Panc1 (cell line): ENCODE measurements at regions of chr12 and their contacts with region 1.

Region 1: DNA sequence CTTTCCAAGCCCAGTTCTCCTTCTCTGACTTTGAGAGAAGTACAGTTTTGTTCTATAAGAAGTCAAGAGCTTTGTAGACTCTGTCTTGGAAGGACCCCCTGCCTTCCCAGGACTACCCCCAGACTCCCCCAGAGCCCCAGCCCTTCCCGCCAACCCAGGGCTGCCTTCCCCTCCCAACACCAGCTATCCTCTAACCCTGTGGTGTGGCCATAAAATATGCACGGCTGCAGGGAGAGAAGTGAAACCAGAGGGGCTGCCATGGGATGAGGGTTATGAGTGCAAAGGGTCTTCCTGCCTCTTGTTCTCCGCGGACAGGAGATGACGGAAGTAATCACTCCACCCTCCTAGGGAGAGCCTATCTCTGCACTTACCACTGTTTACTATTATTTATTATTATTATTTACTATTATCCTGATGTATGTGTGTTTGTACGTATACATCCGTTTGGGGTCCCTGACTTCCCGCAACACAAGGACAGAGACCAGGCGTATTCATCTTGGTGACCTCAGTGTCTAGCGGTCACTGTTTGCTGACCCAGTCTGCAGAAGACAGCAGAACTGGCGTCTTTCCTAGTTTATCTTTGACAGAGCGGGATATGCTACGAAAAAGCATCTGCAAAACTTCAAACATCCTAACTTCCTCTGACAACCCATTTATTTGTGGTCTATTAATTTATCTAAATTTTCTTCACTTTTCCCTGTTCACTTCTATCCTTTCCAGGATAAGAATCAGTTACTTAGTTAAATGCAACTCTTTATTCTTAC is 3.5 kb upstream of the SCNN1A start:
- DNase-seq: no peak
- ATAC-seq: no peak
- H3K4me3 ChIP-seq: no peak overlapping the region
- H3K27ac ChIP-seq: no peak overlapping the region
- H3K4me1 ChIP-seq: peaks cover 39% of the 10 kb centered on the region
- H3K27me3 ChIP-seq: no peaks in the 10 kb centered on the region
- CTCF ChIP-seq: no peak

Region 2: DNA sequence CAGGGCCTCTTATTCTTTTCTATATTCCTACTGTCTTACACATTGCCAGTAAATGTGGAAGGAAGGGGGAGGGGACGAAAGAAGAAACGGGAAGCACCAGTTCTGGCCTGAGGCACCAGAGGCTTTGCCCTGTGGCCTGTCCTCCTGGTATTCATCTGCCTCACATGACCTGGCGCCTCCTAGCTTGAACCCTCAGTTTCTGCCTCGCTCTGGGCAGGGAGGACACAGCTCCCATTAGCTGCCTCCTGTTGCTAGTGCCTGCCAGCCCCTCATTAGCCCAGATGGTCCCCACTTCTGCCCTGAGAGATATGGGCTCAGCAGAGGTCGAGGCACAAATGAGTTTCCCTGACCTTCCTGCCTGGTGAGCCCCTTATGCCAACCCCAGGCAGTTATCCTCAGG is 71.4 kb before region 1 on chr12:
- CTCF ChIA-PET with region 1: no interaction called
- POLR2A ChIA-PET with region 1: interaction called, 11 read pairs
- in situ Hi-C with region 1: no loop called
- intact Hi-C with region 1: no loop called
- DNase-seq: no peak
- ATAC-seq: no peak
- H3K4me3 ChIP-seq: no peak overlapping the region
- H3K27ac ChIP-seq: no peak overlapping the region
- H3K4me1 ChIP-seq: no peaks in the 10 kb centered on the region
- H3K27me3 ChIP-seq: no peaks in the 10 kb centered on the region
- CTCF ChIP-seq: no peak